PC-9 (cell line): ENCODE measurements at regions of chr3 and their contacts with region 1.

Region 1: GRCh38 chr3:168952551-168952950 is 711.0 kb downstream of the MECOM start:
- DNase-seq: peak in 1 of 2 experiments; percentile 55
- H3K4me3 ChIP-seq: no peak overlapping the region
- H3K27ac ChIP-seq: peak overlapping the region; percentile 64
- H3K4me1 ChIP-seq: peaks cover 33% of the 10 kb centered on the region
- H3K27me3 ChIP-seq: no peaks in the 10 kb centered on the region
- CTCF ChIP-seq: peak; percentile 58; the same call in 1 of the 2 replicates

Region 2: DNA sequence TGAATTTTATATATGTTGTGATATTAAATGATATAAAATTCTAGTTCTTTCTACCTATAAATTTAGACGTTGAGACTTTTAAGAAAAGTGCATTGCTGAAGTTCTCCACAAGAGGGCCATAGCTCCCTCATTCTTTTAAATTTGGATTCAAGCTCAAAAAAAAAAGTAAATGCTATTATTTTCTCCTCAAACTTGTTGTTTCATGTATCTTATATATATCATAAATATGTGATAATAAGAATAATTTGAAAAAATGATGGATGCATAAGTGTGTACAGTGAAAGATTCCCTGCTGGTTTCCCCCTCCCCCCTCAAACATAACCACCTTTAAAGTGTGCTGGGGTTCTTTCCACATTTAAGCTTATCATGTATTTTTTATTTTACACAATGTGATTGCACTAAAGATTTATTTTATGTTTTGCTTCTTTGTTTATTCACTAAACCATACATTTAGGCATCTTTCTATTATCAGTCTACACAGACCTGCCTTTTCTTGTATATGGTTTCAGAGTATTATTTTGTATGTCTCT is 87.5 kb before region 1 on chr3:
- CTCF ChIA-PET with region 1: interaction called, 7 read pairs
- POLR2A ChIA-PET with region 1: no interaction called
- intact Hi-C with region 1: loop called (anchors 1 kb)
- DNase-seq: peak in 1 of 2 experiments; percentile 23
- H3K4me3 ChIP-seq: no peak overlapping the region
- H3K27ac ChIP-seq: no peak overlapping the region
- H3K4me1 ChIP-seq: no peaks in the 10 kb centered on the region; the same call in 1 of the 2 replicates
- H3K27me3 ChIP-seq: no peaks in the 10 kb centered on the region
- CTCF ChIP-seq: peak; percentile 94

Region 3: DNA sequence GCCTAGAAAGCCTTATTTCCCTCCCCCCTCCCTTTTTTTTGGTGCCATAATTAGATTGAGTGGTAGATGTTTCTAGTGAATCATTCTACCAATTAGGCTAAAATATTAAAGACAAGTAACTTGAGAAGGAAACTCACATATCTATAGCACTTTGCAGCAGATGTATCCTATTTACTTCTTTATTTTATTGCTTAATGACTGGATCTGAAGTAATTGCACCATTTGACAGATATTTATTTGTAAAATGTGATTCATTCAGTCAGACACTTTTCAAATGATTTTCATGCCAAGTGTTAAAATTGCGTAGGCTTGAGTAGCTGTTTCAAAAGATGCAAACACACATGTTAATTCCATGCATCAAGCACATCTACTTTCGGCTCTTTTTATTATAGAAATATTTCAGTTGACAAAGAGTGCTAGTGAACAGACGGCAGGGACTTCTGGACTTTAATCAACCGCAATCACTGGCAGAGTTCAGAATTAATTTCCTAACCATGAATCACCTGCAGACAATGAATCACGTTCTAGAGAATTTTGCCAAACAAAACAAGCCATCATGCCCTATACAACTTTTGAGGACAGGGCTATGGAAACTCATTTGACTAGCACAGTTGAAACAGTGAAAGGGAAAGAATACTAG is 74.1 kb after region 1 on chr3:
- CTCF ChIA-PET with region 1: interaction called, 4 read pairs
- POLR2A ChIA-PET with region 1: no interaction called
- intact Hi-C with region 1: loop called (anchors 2 kb)
- DNase-seq: peak; percentile 41 to 87
- H3K4me3 ChIP-seq: peak overlapping the region; percentile 14; the same call in 1 of the 2 replicates
- H3K27ac ChIP-seq: peak overlapping the region; percentile 25
- H3K4me1 ChIP-seq: peaks cover 33% of the 10 kb centered on the region
- H3K27me3 ChIP-seq: no peaks in the 10 kb centered on the region
- CTCF ChIP-seq: no peak

Region 4: GRCh38 chr3:169112153-169112892 is 159.8 kb after region 1 on chr3:
- CTCF ChIA-PET with region 1: no interaction called
- POLR2A ChIA-PET with region 1: no interaction called
- intact Hi-C with region 1: loop called (anchors 1 kb)
- DNase-seq: peak in 1 of 2 experiments; percentile 77
- H3K4me3 ChIP-seq: no peak overlapping the region
- H3K27ac ChIP-seq: peak overlapping the region; percentile 67
- H3K4me1 ChIP-seq: peaks cover 13% of the 10 kb centered on the region
- H3K27me3 ChIP-seq: no peaks in the 10 kb centered on the region
- CTCF ChIP-seq: no peak

Region 5: GRCh38 chr3:169241991-169242707 is 289.6 kb after region 1 on chr3:
- CTCF ChIA-PET with region 1: no interaction called
- POLR2A ChIA-PET with region 1: interaction called, 3 read pairs
- intact Hi-C with region 1: loop called (anchors 5 kb)
- DNase-seq: peak; percentile 33 to 60
- H3K4me3 ChIP-seq: peak overlapping the region; percentile 31; the same call in 1 of the 2 replicates
- H3K27ac ChIP-seq: peak overlapping the region; percentile 71
- H3K4me1 ChIP-seq: peaks cover 29% of the 10 kb centered on the region
- H3K27me3 ChIP-seq: no peaks in the 10 kb centered on the region
- CTCF ChIP-seq: no peak